Breast epithelium (tissue), 4 donors: ENCODE measurements at regions of chr4 and their contacts with region 1.

Region 1: GRCh38 chr4:1249148-1249730 is 309 bp upstream of the CTBP1 start:
- DNase-seq: peak; percentile 76 to 79
- H3K4me3 ChIP-seq: peak overlapping the region; percentile 60 to 93 (median 77)
- H3K27ac ChIP-seq: peak overlapping the region; percentile 92 to 94
- H3K4me1 ChIP-seq: peaks cover 25 to 42% of the 10 kb centered on the region in 2 donors
- H3K27me3 ChIP-seq: no peaks in the 10 kb centered on the region
- CTCF ChIP-seq: no peak
- POLR2A ChIP-seq: no peak

Region 2: GRCh38 chr4:1167247-1167949 is 81.8 kb before region 1 on chr4:
- intact Hi-C with region 1: loop called (anchors 5 kb)
- DNase-seq: peak in 1 of 2 donors; percentile 69
- H3K4me3 ChIP-seq: peak overlapping the region; percentile 47 to 66 (median 61)
- H3K27ac ChIP-seq: peak overlapping the region; percentile 48 to 89
- H3K4me1 ChIP-seq: peaks cover 0 to 15% of the 10 kb centered on the region in 2 donors
- H3K27me3 ChIP-seq: peaks cover 8 to 21% of the 10 kb centered on the region in 2 donors
- CTCF ChIP-seq: peak; percentile 66 to 88 (median 86)
- POLR2A ChIP-seq: no peak

Region 3: GRCh38 chr4:1289207-1290164 is 40.2 kb after region 1 on chr4 and contains the start of gene MAEA:
- intact Hi-C with region 1: loop called (anchors 1 kb)
- DNase-seq: peak; percentile 97 to 99
- H3K4me3 ChIP-seq: peak within 1 kb of the TSS; percentile 78 to 93 (median 84)
- H3K27ac ChIP-seq: peak within 1 kb of the TSS; percentile 93 to 95
- H3K4me1 ChIP-seq: peaks cover 13 to 22% of the 10 kb centered on the region in 2 donors
- H3K27me3 ChIP-seq: no peaks in the 10 kb centered on the region
- CTCF ChIP-seq: no peak
- POLR2A ChIP-seq: peak; percentile 7
- total RNA-seq, gene MAEA: 49.9 to 76.7 (median 62.3) TPM

Region 4: GRCh38 chr4:1346781-1347409 is 97.7 kb after region 1 on chr4 and contains the start of gene UVSSA:
- intact Hi-C with region 1: loop called (anchors 1 kb)
- DNase-seq: peak; percentile 100
- H3K4me3 ChIP-seq: peak within 1 kb of the TSS; percentile 81 to 93 (median 92)
- H3K27ac ChIP-seq: peak within 1 kb of the TSS; percentile 97 to 99
- H3K4me1 ChIP-seq: peaks cover 3 to 11% of the 10 kb centered on the region in 2 donors
- H3K27me3 ChIP-seq: no peaks in the 10 kb centered on the region
- CTCF ChIP-seq: no peak
- POLR2A ChIP-seq: peak; percentile 54
- total RNA-seq, gene UVSSA: 13.9 to 22.9 (median 14.3) TPM